ENCODE measurements at regions of chr12 and their contacts with region 1.

Region 1: DNA sequence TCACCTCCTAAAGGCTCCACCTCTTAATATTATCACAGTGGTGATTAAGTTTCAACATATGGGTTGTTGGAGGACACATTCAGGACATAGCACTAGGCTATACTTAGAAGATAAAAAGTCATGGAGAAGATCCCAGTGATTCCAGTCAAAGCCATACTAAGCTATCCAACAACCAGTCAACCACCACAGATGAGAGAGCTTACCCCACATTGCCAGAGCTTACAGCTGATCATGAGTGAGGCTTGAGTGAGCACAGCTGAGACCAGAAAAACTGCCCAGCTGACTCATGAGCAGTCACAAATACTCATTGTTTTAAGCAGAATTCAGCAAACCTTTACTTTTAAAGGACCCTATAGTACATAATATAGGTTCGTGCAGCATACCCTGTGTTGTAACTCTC is 85.1 kb downstream of the DRAM1 start:
- DNase-seq: no peak
- H3K4me3 ChIP-seq: no peak overlapping the region
- H3K27me3 ChIP-seq: no peaks in the 10 kb centered on the region
- CTCF ChIP-seq: no peak

Region 2: GRCh38 chr12:101891462-101892273 is 70.8 kb before region 1 on chr12:
- CTCF ChIA-PET with region 1: no interaction called
- POLR2A ChIA-PET with region 1: no interaction called
- DNase-seq: peak; percentile 74
- H3K4me3 ChIP-seq: no peak overlapping the region
- H3K27me3 ChIP-seq: no peaks in the 10 kb centered on the region
- CTCF ChIP-seq: no peak

Region 3: DNA sequence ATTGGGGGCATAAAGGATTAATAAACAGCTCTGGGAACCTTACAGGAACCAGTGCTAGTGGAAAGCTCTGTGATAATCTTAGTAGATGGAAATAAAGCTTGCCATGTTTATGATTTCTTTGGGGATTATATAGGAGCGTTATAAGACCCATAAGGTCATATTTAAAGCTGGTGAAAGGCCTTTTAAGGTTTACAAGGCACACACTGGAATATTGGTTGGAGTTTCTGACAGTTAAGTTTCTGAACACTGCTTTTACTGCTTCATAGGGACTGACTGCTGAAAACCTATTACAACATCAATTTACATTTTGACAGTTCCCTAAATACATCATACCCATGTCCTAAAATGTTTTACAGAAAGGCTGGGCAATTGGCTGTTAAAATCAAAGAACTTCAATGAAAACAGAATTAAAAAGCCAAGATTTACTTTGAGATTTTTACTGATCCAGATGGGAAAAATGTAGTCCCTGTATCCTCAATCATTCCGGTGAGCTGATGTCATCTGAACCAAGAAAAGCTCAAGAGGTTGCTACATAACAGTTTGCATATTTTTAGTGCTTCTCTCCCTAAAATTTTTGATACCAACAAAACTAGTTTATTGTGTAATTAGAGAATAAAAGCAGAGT is 671.6 kb after region 1 on chr12:
- CTCF ChIA-PET with region 1: no interaction called
- POLR2A ChIA-PET with region 1: interaction called, 11 read pairs
- DNase-seq: peak; percentile 85
- H3K4me3 ChIP-seq: no peak overlapping the region
- H3K27me3 ChIP-seq: no peaks in the 10 kb centered on the region
- CTCF ChIP-seq: no peak